HEK293T (cell line): ENCODE measurements at regions of chr7 and their contacts with region 1.

Region 1: GRCh38 chr7:12458520-12459131 is 55.0 kb upstream of the VWDE start:
- DNase-seq: peak; percentile 49

Region 2: GRCh38 chr7:12269100-12269895 is 189.3 kb before region 1 on chr7:
- CTCF ChIA-PET with region 1: no interaction called
- POLR2A ChIA-PET with region 1: no interaction called
- DNase-seq: no peak

Region 3: GRCh38 chr7:12423355-12423994 is 35.2 kb before region 1 on chr7:
- CTCF ChIA-PET with region 1: no interaction called
- POLR2A ChIA-PET with region 1: no interaction called
- DNase-seq: no peak

Region 4: DNA sequence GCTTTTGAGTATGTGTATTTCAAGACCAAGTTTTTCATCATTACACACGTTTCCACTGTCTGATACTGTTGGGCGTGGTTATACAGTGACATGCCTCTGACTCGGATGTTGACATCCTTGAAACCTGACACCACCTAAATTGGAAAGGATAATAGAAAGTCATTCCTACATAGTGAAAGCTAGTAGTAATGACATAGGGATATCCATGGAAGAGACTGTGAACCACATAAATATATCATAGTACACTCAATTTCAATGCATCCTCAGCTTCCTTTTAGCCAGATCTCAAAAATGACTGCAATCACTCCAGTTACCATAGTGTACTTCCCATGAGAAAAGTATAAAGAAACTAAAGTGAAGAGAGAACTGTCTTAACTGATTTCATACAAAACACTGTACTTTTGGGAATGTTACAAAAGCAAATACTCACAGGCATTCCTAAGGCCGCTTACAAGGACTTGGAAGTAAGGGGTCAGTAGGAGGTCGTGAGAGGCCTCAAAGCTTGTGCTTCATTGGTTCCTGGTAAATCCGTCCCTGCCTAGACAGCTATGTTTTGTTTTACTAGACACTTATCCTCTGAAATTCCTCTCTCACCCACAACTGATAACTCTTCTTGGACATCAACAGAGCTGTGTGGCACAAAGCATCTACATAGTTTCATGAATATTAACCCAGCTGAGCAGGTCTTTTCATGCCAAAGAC is 16.9 kb after region 1 on chr7:
- CTCF ChIA-PET with region 1: interaction called, 16 read pairs
- POLR2A ChIA-PET with region 1: no interaction called
- DNase-seq: no peak

Region 5: GRCh38 chr7:12490117-12490688 is 31.6 kb after region 1 on chr7:
- CTCF ChIA-PET with region 1: interaction called, 23 read pairs
- POLR2A ChIA-PET with region 1: no interaction called
- DNase-seq: peak; percentile 7